ENCODE measurements at regions of chr14 and their contacts with region 1.

Region 1: DNA sequence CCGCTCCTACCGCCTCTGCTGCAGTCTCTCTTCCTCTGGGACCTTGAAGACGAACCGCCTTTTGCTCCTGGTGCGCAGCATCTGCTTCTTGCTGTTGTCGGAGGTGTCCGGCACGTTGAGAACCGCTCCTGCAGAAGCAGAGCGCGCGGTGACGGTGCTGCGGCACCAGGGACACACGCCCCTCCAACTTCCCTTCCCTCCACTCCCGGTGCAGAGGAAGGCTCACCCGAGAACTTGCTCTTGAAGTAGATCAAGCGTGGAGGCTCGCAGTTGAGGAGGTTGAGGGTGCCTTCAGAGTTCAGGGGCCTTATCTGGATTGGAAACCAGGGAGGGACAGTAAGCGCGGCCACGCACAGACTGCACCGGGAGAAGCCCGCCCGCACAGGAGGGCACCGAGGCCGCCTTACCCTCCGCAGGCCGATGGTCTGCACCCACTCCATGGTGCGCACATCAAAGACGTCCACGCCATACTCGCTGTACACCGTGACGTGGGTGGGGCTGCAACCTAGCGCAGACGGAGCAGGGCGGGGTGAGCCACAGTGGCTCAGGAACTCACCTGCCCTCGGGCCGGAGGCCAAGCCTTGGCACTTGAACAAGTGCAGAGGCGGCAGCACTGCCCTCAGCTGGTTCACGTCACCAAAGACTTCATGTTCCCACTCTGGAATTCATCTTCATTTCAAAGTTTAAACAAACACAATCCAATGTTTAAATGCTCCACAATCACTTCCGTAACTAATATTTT is 17.5 kb downstream of the AMN start:
- DNase-seq: no peak
- H3K4me3 ChIP-seq: no peak overlapping the region
- CTCF ChIP-seq: no peak

Region 2: GRCh38 chr14:102591889-102592763 is 347.9 kb before region 1 on chr14 and contains the start of gene RCOR1:
- in situ Hi-C with region 1: no loop called
- DNase-seq: peak; percentile 92
- H3K4me3 ChIP-seq: peak within 1 kb of the TSS; percentile 91
- CTCF ChIP-seq: no peak

Region 3: DNA sequence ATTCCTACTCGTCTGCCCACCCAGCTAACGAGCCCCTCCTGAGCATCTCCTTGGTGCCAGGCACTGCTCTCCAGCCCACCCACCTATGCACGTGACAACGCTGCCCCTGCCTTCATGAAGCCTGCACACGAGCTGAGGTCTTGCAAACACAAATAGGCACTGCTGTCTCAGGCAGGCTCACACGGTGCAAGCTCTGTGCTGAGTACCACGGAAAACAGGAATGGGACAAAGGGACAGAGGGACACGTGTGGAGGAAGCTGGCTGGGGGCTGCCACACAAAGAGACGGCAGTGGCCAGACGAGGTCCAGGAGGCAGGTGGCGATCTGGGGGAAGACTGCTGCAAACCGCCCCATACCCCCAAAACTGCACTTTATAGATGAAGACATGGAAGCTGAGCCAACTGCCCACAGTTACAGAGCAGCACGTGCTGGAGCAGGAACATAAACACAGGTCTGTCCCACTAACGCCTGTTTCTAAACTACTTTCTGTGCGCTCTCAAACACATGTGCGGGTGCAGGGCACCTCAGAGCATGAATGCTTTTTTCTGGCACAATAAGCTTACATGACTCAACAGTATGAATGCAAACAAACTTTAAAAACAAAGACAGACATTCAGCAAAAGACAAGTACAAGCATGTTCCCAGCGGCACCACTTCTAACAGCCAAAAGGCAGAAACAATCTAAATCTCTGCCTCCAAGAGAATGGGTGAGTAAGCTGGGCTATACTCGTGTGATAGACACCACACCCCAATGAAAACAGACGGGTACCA is 47.0 kb after region 1 on chr14:
- in situ Hi-C with region 1: loop called (anchors 5 kb)
- DNase-seq: peak; percentile 22
- H3K4me3 ChIP-seq: no peak overlapping the region
- CTCF ChIP-seq: no peak

Measured in astrocyte of the cerebellum (primary cell).